Activated naive CD4-positive, alpha-beta T cell treated with anti-CD3 and anti-CD28 coated beads for 36 hours (primary cell): ENCODE measurements at regions of chr3 and their contacts with region 1.

Region 1: DNA sequence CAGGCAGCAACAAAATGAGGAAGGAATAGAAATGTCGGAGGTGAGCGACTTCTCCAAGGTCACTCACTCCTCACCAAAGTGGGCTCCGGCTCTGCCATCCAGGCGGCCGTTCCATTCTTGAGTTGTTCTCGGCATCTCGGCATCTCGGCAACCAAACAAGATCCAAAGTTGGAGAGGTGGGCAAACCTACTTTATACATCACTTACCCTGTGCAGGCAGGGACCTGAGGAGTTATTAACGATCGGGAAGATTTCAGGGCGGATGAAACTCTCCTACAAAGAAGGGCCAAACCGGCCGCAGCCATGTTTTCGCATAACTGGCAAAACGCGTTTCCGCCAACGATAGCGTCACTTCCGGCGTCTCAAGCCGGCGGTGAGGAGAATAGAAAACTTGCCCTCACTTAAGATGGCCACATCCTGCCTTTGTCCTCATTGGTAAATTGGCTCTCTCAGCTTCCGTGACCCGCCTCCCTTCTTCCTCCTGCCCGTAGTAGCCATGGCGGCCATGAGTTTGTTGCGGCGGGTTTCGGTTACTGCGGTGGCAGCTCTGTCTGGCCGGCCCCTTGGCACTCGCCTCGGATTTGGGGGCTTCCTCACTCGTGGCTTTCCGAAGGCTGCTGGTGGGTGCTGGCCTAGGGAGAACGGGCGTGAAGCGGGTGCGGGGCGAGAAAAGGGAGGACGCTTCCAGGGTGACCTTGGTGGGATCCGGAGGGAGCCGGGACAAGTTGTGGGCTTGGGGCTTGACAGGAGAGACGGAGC is at the starts of genes MRPL47 and NDUFB5:
- DNase-seq: peak; percentile 96
- H3K4me3 Mint-ChIP-seq: peak within 1 kb of the TSS; percentile 100
- H3K27ac Mint-ChIP-seq: peak within 1 kb of the TSS; percentile 99
- H3K4me1 Mint-ChIP-seq: peaks cover 48% of the 10 kb centered on the region
- H3K27me3 Mint-ChIP-seq: no peaks in the 10 kb centered on the region
- total RNA-seq, gene MRPL47: 48.8 to 50.4 TPM
- total RNA-seq, gene NDUFB5: 148 to 151 TPM

Region 2: DNA sequence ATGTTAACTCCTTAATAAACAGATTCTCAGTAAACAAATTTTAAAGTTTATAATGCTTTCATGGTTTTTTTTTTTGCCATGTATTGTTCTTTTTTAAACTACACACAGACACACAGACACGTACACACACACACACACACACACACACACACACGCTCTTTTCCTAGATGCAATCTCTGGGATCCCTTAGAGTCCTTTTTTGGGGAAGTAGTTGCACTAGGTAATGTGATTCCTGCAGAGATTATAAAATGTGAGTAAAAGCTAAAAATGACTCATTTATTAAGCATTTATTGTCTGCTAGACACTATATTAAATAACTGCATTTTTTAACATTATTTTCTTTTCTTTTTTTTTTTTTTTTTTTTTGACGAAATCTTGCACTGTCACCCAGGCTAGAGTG is 20.0 kb after region 1 on chr3:
- CTCF ChIA-PET with region 1: no interaction called
- intact Hi-C with region 1: no loop called
- DNase-seq: no peak
- H3K4me3 Mint-ChIP-seq: no peak overlapping the region
- H3K27ac Mint-ChIP-seq: no peak overlapping the region
- H3K4me1 Mint-ChIP-seq: no peaks in the 10 kb centered on the region
- H3K27me3 Mint-ChIP-seq: no peaks in the 10 kb centered on the region

Region 3: GRCh38 chr3:179646177-179646576 is 41.7 kb after region 1 on chr3:
- CTCF ChIA-PET with region 1: interaction called, 7 read pairs
- intact Hi-C with region 1: loop called (anchors 1 kb)
- DNase-seq: no peak
- H3K4me3 Mint-ChIP-seq: no peak overlapping the region
- H3K27ac Mint-ChIP-seq: no peak overlapping the region
- H3K4me1 Mint-ChIP-seq: peaks cover 3% of the 10 kb centered on the region
- H3K27me3 Mint-ChIP-seq: no peaks in the 10 kb centered on the region

Region 4: DNA sequence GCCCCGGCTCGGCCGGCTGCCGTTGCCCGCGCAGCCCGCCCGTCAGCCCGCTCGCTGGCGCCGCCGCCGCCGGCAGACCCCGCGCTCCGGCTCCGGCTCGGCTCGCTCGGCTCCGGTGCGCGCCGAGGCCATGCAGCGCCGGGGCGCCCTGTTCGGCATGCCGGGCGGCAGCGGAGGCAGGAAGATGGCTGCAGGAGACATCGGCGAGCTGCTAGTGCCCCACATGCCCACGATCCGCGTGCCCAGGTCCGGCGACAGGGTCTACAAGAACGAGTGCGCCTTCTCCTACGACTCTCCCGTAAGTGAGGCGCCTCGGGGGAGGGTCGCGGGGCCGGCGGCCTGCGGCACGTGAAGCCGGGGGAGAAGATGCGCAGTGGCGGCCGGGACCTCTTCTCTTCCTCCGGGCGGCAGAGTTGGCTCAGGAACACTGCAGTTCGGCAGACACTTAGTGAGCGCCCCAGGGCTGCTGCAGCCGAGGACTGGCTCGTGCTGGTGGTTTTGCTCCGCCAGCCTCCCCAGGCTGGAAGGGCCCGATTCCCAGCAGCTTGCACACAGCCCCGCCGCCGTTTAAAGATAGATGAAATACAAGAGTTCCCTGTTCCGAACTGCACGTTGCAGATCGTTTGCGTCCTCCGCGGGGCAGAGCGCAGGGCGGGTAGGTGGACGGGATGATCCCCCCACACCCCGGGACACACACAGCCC is 48.7 kb after region 1 on chr3:
- CTCF ChIA-PET with region 1: interaction called, 7 read pairs
- intact Hi-C with region 1: loop called (anchors 1 kb)
- DNase-seq: peak; percentile 72
- H3K4me3 Mint-ChIP-seq: peak overlapping the region; percentile 85
- H3K27ac Mint-ChIP-seq: peak overlapping the region; percentile 67
- H3K4me1 Mint-ChIP-seq: peaks cover 17% of the 10 kb centered on the region
- H3K27me3 Mint-ChIP-seq: peaks cover 8% of the 10 kb centered on the region

Region 5: DNA sequence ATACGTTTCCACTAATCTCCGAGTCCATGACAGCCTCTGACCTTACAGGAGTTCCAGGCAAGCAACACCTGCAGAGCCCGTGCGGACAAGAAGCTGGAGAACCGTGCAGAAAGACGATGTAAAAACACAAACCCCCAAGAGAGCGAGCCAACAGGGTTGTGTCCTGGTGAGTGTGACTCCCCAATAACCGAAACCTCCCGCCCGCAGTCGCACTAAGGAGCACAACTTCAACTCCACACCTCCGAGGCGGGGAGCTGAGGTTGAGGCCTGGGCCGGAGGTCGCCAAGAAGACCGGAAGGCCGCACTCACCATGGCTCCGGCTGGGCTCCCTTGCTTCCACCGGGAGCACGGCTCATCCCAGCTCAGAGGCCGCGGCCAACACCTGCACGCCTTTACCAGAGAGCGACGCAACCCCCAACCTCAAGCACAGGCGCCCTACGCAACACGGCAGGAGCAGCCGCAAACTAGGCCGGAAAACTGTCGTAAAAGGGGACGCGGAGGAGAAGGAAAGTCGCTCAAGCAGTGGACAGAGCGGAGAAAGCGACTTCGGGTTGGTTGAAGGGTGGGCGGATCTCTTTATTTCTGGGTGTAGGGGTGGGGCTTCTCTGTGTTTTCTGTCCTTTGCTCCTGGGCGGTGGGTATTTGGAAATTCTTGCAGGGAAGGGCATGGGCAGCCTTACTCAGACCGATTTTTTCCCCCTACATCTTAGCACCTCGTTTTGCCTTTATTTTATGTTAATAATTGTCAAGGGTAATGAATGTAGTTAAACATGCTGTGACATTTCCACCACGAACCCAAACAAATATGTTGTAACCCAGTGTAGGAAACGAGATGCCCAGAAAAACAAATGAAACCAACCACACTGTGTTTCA is 1385.0 kb after region 1 on chr3 and contains the start of gene DNAJC19:
- CTCF ChIA-PET with region 1: no interaction called
- intact Hi-C with region 1: loop called (anchors 10 kb)
- DNase-seq: peak; percentile 94
- H3K4me3 Mint-ChIP-seq: peak within 1 kb of the TSS; percentile 85
- H3K27ac Mint-ChIP-seq: peak within 1 kb of the TSS; percentile 87
- H3K4me1 Mint-ChIP-seq: peaks cover 26% of the 10 kb centered on the region
- H3K27me3 Mint-ChIP-seq: no peaks in the 10 kb centered on the region
- total RNA-seq, gene DNAJC19: 72.2 to 73.8 TPM